Gastrocnemius medialis (tissue), 4 donors: ENCODE measurements at regions of chr17 and their contacts with region 1.

Region 1: GRCh38 chr17:54372069-54372749 is 528.4 kb upstream of the TOM1L1 start:
- DNase-seq: no peak
- ATAC-seq: no peak
- H3K4me3 ChIP-seq: no peak overlapping the region
- H3K27ac ChIP-seq: no peak overlapping the region
- H3K4me1 ChIP-seq: no peaks in the 10 kb centered on the region
- H3K27me3 ChIP-seq: no peaks in the 10 kb centered on the region
- CTCF ChIP-seq: no peak
- POLR2A ChIP-seq: no peak

Region 2: GRCh38 chr17:54307351-54307750 is 64.9 kb before region 1 on chr17:
- in situ Hi-C with region 1: loop called in 1 of 4 experiments (anchors 10 kb)
- intact Hi-C with region 1: no loop called
- DNase-seq: no peak
- ATAC-seq: no peak
- H3K4me3 ChIP-seq: no peak overlapping the region
- H3K27ac ChIP-seq: no peak overlapping the region
- H3K4me1 ChIP-seq: no peaks in the 10 kb centered on the region
- H3K27me3 ChIP-seq: no peaks in the 10 kb centered on the region
- CTCF ChIP-seq: no peak
- POLR2A ChIP-seq: no peak

Region 3: GRCh38 chr17:54494721-54495715 is 122.8 kb after region 1 on chr17:
- in situ Hi-C with region 1: no loop called
- intact Hi-C with region 1: no loop called
- DNase-seq: no peak
- ATAC-seq: no peak
- H3K4me3 ChIP-seq: no peak overlapping the region
- H3K27ac ChIP-seq: no peak overlapping the region
- H3K4me1 ChIP-seq: no peaks in the 10 kb centered on the region
- H3K27me3 ChIP-seq: no peaks in the 10 kb centered on the region
- CTCF ChIP-seq: no peak
- POLR2A ChIP-seq: no peak